GM12878 (cell line): ENCODE measurements at regions of chr22 and their contacts with region 1.

Region 1: DNA sequence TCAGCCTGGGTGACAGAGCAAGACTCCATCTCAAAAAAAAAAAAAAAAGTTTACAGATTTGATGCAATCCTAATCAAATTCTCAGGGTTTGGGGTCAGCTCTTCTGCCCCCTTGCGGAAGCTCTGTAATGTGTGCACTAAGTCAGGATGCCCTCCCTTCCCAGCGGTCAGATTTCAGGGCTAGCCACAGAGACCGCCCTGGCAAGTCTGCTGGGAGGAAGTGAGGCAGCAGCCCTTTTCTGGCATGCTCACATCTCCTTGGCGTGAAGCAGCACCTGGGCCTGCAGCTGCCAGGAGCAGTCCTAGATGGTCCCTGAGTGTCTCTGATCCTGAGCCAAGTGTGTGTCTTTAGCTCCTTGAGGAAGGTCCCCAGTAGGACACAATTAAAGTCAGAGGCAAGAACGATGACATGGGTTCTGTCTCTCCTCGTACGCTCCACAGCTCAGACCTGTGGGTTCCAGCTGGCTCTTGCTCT is 10.9 kb upstream of the APOBEC3C start:
- DNase-seq: peak; percentile 81
- ATAC-seq: peak; percentile 99
- H3K4me3 ChIP-seq: no peak overlapping the region
- H3K27ac ChIP-seq: no peak overlapping the region
- H3K4me1 ChIP-seq: peaks cover 7% of the 10 kb centered on the region
- H3K27me3 ChIP-seq: no peaks in the 10 kb centered on the region
- CTCF ChIP-seq: peak; percentile 69 to 76 (median 75)
- EP300 ChIP-seq: no peak
- POLR2A ChIP-seq: no peak
- RAD21 ChIP-seq: peak; percentile 74

Region 2: DNA sequence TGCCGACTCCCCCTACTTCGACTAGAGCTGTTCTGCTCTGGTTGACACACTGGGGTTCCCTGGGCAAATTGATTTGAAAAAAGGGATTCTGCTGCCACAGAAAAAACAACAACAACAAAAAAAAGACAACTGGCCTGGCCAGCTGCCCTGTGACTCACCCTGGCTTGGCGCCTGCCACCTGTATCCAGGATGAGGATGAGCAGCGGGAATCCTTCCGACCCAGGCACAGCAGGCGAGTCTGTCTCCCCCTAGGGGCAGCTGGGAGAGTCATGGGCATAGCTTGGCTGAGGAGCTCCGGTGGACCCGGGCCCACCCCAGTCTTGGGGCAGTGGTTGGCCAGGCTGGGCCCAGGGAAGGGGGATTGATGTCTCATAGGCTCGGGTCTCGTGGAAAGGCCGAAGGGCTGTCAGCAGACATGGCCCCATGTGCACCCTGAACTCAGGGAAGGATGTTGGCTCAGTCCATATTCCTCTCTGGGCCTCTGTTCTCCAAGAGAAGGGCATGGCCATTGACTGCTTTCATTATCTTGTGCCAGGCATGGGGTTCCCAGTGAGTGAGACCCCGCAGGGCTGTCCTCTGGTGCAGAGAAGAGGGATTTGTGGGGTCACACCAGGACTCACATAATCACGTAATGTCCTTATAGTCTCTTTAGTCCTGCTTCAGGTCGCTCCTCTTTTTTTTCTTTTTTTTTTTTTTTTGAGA is 237.0 kb before region 1 on chr22:
- CTCF ChIA-PET with region 1: interaction called, 17 read pairs
- POLR2A ChIA-PET with region 1: no interaction called
- RAD21 ChIA-PET with region 1: interaction called, 23 read pairs
- SMC1A ChIA-PET with region 1: interaction called, 8 read pairs
- in situ Hi-C with region 1: no loop called
- intact Hi-C with region 1: loop called (anchors 2 kb)
- DNase-seq: no peak
- ATAC-seq: peak; percentile 75
- H3K4me3 ChIP-seq: no peak overlapping the region
- H3K27ac ChIP-seq: no peak overlapping the region
- H3K4me1 ChIP-seq: peaks cover 2% of the 10 kb centered on the region; the same call in 1 of the 2 replicates
- H3K27me3 ChIP-seq: no peaks in the 10 kb centered on the region; a peak in 1 of 4 replicates
- CTCF ChIP-seq: peak; percentile 70 to 86 (median 71)
- EP300 ChIP-seq: no peak
- POLR2A ChIP-seq: no peak
- RAD21 ChIP-seq: no peak

Region 3: GRCh38 chr22:38811241-38811640 is 192.0 kb before region 1 on chr22:
- CTCF ChIA-PET with region 1: no interaction called
- POLR2A ChIA-PET with region 1: no interaction called
- RAD21 ChIA-PET with region 1: no interaction called
- SMC1A ChIA-PET with region 1: no interaction called
- in situ Hi-C with region 1: no loop called
- intact Hi-C with region 1: no loop called
- DNase-seq: no peak
- ATAC-seq: no peak
- H3K4me3 ChIP-seq: no peak overlapping the region
- H3K27ac ChIP-seq: no peak overlapping the region
- H3K4me1 ChIP-seq: no peaks in the 10 kb centered on the region
- H3K27me3 ChIP-seq: peaks cover 0 to 1% of the 10 kb centered on the region in 2 experiments; a peak in 1 of 4 replicates
- CTCF ChIP-seq: no peak
- EP300 ChIP-seq: no peak
- POLR2A ChIP-seq: no peak
- RAD21 ChIP-seq: no peak

Region 4: DNA sequence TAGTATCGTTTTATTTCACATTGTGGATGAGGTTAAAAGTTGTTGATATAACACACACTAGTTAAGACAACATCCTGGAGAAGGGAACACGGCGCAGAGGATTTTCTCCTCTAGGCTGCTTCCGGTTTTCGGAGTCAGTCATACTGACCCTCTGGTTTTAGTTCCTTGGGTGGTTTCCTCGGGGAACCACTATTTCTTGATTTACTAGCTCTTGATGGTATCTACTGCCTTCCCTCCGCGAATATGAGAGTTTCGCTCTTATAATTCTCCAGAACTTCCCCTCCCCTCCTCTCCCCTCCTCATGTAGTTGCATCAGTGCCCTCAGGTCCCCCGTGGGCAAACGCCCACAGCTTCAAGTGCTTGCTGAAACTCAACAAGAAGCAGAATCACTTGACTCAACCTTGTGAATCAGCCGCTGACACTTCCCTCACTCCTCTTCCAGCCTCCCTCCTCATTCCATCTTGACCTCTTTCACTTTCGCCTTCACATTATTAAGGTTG is 61.7 kb before region 1 on chr22:
- CTCF ChIA-PET with region 1: interaction called, 10 read pairs
- POLR2A ChIA-PET with region 1: no interaction called
- RAD21 ChIA-PET with region 1: no interaction called
- SMC1A ChIA-PET with region 1: interaction called, 5 read pairs
- in situ Hi-C with region 1: no loop called
- intact Hi-C with region 1: no loop called
- DNase-seq: peak; percentile 88
- ATAC-seq: peak; percentile 91
- H3K4me3 ChIP-seq: peak overlapping the region; percentile 12
- H3K27ac ChIP-seq: peak overlapping the region; percentile 64
- H3K4me1 ChIP-seq: peaks cover 33% of the 10 kb centered on the region
- H3K27me3 ChIP-seq: no peaks in the 10 kb centered on the region
- CTCF ChIP-seq: no peak
- EP300 ChIP-seq: peak; percentile 61 to 62; a peak in 1 of 4 replicates
- POLR2A ChIP-seq: peak; percentile 36; the same call in 1 of the 2 replicates
- RAD21 ChIP-seq: no peak

Region 5: DNA sequence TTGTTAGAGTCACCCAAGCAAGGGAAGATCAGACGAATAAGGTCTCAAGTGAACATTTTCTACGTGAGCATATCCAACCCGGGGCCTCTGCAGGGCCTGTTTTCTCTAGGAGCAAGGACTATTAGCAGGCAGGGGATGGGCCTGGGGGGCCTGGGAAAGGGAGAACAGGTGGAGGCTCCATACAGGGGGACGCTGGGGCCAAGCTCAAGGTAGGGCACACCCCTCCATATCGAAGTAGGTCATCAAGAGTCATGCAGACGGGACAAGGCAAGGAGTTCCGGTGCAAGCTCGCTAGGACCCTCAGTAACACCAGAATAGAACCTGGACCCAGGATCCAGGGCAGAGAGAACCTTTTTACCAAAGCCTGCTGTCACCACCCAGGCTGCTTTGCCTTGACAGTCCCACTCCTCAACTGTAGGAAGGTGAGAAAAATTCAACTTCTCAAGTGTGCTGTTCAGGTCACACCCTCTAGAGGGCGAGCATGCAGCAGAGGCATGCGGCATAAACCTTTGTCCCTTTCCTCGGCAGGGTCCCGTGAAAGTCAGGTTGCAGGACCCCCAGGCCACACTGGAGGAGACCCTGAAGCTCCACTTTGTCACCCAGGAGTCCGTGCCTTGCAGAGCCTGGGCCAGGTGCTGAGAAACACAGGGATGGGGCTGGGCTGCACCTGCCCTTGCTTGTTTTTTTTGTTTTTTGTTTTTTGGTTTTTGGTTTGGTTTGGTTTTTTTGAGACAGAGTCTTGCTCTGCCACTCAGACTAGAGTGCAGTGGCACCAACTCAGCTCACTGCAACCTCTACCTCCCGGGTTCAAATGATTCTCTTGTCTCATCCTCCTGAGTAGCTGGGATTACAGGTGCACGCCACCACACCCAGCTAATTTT is 29.7 kb before region 1 on chr22:
- CTCF ChIA-PET with region 1: interaction called, 52 read pairs
- POLR2A ChIA-PET with region 1: no interaction called
- RAD21 ChIA-PET with region 1: interaction called, 39 read pairs
- SMC1A ChIA-PET with region 1: interaction called, 50 read pairs
- in situ Hi-C with region 1: no loop called
- intact Hi-C with region 1: loop called (anchors 1 kb)
- DNase-seq: no peak
- ATAC-seq: peak; percentile 94
- H3K4me3 ChIP-seq: no peak overlapping the region
- H3K27ac ChIP-seq: no peak overlapping the region
- H3K4me1 ChIP-seq: no peaks in the 10 kb centered on the region
- H3K27me3 ChIP-seq: no peaks in the 10 kb centered on the region; a peak in 1 of 4 replicates
- CTCF ChIP-seq: peak; percentile 91 to 96 (median 96)
- EP300 ChIP-seq: no peak
- POLR2A ChIP-seq: no peak
- RAD21 ChIP-seq: peak; percentile 90

Region 6: GRCh38 chr22:39117585-39118191 is 114.5 kb after region 1 on chr22:
- CTCF ChIA-PET with region 1: interaction called, 74 read pairs
- POLR2A ChIA-PET with region 1: interaction called, 8 read pairs
- RAD21 ChIA-PET with region 1: interaction called, 13 read pairs
- SMC1A ChIA-PET with region 1: interaction called, 11 read pairs
- in situ Hi-C with region 1: loop called (anchors 5 kb)
- intact Hi-C with region 1: loop called (anchors 2 kb)
- DNase-seq: peak; percentile 81
- ATAC-seq: peak; percentile 75
- H3K4me3 ChIP-seq: no peak overlapping the region
- H3K27ac ChIP-seq: peak overlapping the region; percentile 96
- H3K4me1 ChIP-seq: peaks cover 49% of the 10 kb centered on the region
- H3K27me3 ChIP-seq: no peaks in the 10 kb centered on the region
- CTCF ChIP-seq: peak; percentile 56 to 75 (median 64)
- EP300 ChIP-seq: peak; percentile 82 to 95
- POLR2A ChIP-seq: no peak
- RAD21 ChIP-seq: peak; percentile 86

Region 7: DNA sequence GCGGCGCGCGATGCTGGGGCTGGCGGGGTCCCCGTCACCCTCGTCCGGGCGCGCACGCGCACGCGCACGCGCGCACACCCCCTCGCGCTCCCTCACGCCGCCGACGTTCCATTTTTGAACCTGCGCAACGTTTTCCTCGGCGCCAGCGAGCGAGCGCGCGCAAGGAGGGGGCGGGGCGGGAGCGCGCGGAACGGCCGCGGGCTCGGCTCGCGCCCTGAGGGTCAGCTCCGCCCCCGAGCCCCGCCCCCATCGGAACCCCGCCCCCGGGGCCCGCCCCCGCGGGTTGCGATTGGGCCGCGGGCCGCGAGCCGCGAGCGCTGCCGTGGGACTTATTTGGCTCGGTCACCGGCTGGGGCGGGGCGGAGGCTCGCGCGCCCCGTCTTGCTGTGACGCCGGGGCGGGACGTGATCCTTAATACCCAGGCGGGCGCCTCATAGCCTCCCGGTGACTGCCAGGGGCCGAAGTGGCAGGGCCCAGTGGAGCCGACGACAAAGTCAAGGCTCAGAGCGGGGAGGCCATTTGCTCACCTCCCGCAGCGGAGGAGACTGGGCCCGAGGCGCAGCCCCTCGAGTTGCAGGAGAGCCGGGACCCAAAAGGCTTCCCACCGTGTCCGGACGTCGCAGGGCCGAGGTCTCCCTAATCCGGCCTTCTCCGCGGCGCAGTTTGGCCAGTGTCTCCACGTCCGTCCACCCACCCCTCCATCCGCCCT is 149.5 kb after region 1 on chr22 and contains the start of gene CBX7:
- CTCF ChIA-PET with region 1: interaction called, 15 read pairs
- POLR2A ChIA-PET with region 1: no interaction called
- RAD21 ChIA-PET with region 1: interaction called, 8 read pairs
- SMC1A ChIA-PET with region 1: interaction called, 5 read pairs
- in situ Hi-C with region 1: no loop called
- intact Hi-C with region 1: no loop called
- DNase-seq: peak; percentile 46
- ATAC-seq: peak; percentile 79
- H3K4me3 ChIP-seq: peak within 1 kb of the TSS; percentile 80
- H3K27ac ChIP-seq: peak within 1 kb of the TSS; percentile 73
- H3K4me1 ChIP-seq: peaks cover 41% of the 10 kb centered on the region
- H3K27me3 ChIP-seq: peaks cover 3 to 12% of the 10 kb centered on the region in 2 experiments
- CTCF ChIP-seq: no peak
- EP300 ChIP-seq: no peak
- POLR2A ChIP-seq: peak; percentile 73
- RAD21 ChIP-seq: no peak
- polyA plus RNA-seq, gene CBX7: 0.18 to 0.64 TPM